Activated CD8-positive, alpha-beta T cell treated with anti-CD3 and anti-CD28 coated beads for 36 hours (primary cell): ENCODE measurements at regions of chr1 and their contacts with region 1.

Region 1: DNA sequence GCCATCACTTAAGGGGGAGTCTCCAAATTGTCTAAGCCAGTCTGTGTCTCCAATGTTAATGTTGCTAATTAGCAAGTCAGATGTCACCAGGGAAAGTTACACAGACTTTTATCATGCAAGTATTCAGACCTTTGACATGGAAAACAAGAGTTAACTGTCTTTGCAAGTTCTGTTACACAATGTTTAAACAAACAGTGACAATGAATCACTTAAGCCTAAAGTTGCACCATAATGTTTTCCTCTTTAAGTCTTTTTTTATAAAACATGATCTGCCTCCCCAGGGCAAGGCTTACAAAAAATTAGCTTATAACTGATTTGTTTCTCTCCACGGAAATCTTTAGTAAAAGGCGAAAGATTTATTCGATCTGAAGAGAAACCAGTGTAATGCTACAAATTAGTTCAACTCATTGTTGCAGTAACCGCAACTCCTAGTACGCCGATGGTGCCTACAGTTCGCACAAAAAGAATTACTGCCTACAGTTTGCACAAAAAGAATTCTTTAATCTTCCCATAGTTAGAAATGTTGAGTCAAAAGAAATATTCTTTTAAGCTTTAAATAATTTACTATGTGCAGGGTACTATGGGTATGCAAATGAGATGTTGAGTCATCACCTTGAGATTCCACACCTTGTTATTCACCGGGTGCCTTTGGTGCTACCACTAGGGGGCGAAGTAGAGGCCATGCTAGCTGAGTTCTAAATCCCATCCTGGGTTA is 45.3 kb downstream of the HHAT start:
- DNase-seq: peak; percentile 88
- ATAC-seq: peak; percentile 80
- H3K4me3 Mint-ChIP-seq: no peak overlapping the region
- H3K27ac Mint-ChIP-seq: peak overlapping the region; percentile 87
- H3K4me1 Mint-ChIP-seq: peaks cover 37% of the 10 kb centered on the region
- H3K27me3 Mint-ChIP-seq: no peaks in the 10 kb centered on the region
- CTCF ChIP-seq: peak; percentile 89

Region 2: GRCh38 chr1:210174133-210174532 is 199.9 kb before region 1 on chr1:
- CTCF ChIA-PET with region 1: no interaction called
- POLR2A ChIA-PET with region 1: no interaction called
- intact Hi-C with region 1: no loop called
- DNase-seq: no peak
- ATAC-seq: no peak
- H3K4me3 Mint-ChIP-seq: no peak overlapping the region
- H3K27ac Mint-ChIP-seq: no peak overlapping the region
- H3K4me1 Mint-ChIP-seq: no peaks in the 10 kb centered on the region
- H3K27me3 Mint-ChIP-seq: peaks cover 13% of the 10 kb centered on the region
- CTCF ChIP-seq: no peak

Region 3: DNA sequence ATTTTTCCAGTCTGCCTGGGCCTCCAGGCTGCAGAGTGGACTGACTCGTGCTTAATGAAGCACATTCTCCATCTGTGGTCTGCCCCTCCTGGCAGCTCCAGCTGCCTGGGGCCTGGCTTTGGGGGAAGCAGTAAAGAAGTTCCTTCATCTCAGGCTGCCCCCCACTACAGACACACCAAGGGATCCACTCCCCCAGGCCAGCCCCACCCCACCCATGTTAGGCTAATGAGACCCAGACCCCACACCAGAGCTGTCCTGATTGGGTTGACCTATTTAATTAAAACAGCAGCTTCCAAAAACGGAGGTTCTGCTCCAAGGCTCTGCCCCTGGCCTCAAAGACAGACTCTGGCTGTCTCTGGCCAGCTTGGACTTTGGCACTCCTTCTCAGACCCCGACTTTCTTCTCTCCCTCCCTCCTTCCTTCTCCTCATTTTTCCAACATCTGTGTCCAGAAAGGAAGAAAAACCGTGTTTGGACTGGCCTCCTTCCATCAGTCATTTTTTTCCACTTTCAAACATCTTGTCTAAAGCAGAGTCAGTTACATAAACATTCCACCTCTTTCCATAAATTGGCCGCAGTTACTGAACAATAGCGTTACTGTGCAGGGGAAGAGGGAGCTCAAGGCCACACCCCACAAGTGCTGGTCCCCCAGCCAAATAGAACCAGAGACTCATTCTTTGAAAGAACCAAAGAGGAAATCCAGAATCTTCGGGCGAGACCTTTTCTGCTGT is 111.7 kb before region 1 on chr1:
- CTCF ChIA-PET with region 1: no interaction called
- POLR2A ChIA-PET with region 1: no interaction called
- intact Hi-C with region 1: no loop called
- DNase-seq: no peak
- ATAC-seq: no peak
- H3K4me3 Mint-ChIP-seq: no peak overlapping the region
- H3K27ac Mint-ChIP-seq: no peak overlapping the region
- H3K4me1 Mint-ChIP-seq: no peaks in the 10 kb centered on the region
- H3K27me3 Mint-ChIP-seq: peaks cover 5% of the 10 kb centered on the region
- CTCF ChIP-seq: no peak

Region 4: DNA sequence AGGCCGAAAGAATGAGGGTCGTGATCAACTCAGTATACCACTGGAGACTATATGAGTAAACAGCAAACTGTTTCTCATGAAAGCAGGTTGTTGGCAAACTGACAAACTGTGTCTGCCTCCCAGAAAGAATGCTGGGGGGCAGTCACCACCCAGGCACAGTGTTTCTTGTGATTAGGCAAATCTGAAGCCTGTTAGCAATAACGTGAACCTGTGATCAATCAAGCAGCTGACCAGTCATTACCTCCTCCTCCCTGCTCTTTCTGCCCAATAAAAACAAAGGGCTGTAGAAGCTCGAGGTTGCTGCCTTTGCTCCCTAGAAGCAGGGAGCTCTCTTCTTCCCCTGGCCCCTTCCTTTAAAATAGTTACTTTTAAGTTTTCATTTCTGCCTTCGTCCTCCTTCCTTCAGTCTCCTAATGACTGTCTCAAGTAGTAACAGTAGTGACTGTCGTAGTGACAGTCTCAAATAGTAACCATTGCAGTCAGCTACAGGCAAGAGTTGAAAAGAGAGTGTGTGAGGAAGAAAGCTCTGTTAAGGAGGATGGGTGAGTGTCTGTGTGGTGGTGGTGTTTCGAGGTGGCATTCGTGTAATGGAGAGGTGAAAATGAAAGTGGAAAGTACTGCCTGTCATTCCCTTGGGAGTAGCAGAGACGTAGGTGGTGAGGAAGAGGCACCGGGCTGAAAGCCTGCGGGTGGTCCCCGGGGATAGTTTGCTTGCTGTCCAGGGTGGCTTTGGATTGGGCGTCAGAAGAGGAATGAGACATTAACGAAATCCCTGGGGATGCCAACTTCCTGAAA is 30.9 kb before region 1 on chr1:
- CTCF ChIA-PET with region 1: interaction called, 14 read pairs
- POLR2A ChIA-PET with region 1: interaction called, 21 read pairs
- intact Hi-C with region 1: no loop called
- DNase-seq: no peak
- ATAC-seq: no peak
- H3K4me3 Mint-ChIP-seq: no peak overlapping the region
- H3K27ac Mint-ChIP-seq: no peak overlapping the region
- H3K4me1 Mint-ChIP-seq: peaks cover 40% of the 10 kb centered on the region
- H3K27me3 Mint-ChIP-seq: no peaks in the 10 kb centered on the region
- CTCF ChIP-seq: no peak

Region 5: GRCh38 chr1:210360852-210361477 is 13.1 kb before region 1 on chr1:
- CTCF ChIA-PET with region 1: interaction called, 12 read pairs
- POLR2A ChIA-PET with region 1: interaction called, 23 read pairs
- intact Hi-C with region 1: no loop called
- DNase-seq: no peak
- ATAC-seq: peak; percentile 73
- H3K4me3 Mint-ChIP-seq: no peak overlapping the region
- H3K27ac Mint-ChIP-seq: no peak overlapping the region
- H3K4me1 Mint-ChIP-seq: peaks cover 4% of the 10 kb centered on the region
- H3K27me3 Mint-ChIP-seq: no peaks in the 10 kb centered on the region
- CTCF ChIP-seq: peak; percentile 51

Region 6: GRCh38 chr1:210394281-210394821 is 20.3 kb after region 1 on chr1:
- CTCF ChIA-PET with region 1: interaction called, 114 read pairs
- POLR2A ChIA-PET with region 1: interaction called, 78 read pairs
- intact Hi-C with region 1: no loop called
- DNase-seq: peak; percentile 63
- ATAC-seq: peak; percentile 58
- H3K4me3 Mint-ChIP-seq: no peak overlapping the region
- H3K27ac Mint-ChIP-seq: peak overlapping the region; percentile 40
- H3K4me1 Mint-ChIP-seq: peaks cover 43% of the 10 kb centered on the region
- H3K27me3 Mint-ChIP-seq: peaks cover 3% of the 10 kb centered on the region
- CTCF ChIP-seq: no peak

Region 7: GRCh38 chr1:210448297-210448892 is 74.4 kb after region 1 on chr1:
- CTCF ChIA-PET with region 1: interaction called, 5 read pairs
- POLR2A ChIA-PET with region 1: interaction called, 15 read pairs
- intact Hi-C with region 1: no loop called
- DNase-seq: peak; percentile 49
- ATAC-seq: no peak
- H3K4me3 Mint-ChIP-seq: no peak overlapping the region
- H3K27ac Mint-ChIP-seq: no peak overlapping the region
- H3K4me1 Mint-ChIP-seq: peaks cover 22% of the 10 kb centered on the region
- H3K27me3 Mint-ChIP-seq: no peaks in the 10 kb centered on the region
- CTCF ChIP-seq: peak; percentile 73